Aorta (tissue), 5 donors: ENCODE measurements at regions of chr11 and their contacts with region 1.

Region 1: DNA sequence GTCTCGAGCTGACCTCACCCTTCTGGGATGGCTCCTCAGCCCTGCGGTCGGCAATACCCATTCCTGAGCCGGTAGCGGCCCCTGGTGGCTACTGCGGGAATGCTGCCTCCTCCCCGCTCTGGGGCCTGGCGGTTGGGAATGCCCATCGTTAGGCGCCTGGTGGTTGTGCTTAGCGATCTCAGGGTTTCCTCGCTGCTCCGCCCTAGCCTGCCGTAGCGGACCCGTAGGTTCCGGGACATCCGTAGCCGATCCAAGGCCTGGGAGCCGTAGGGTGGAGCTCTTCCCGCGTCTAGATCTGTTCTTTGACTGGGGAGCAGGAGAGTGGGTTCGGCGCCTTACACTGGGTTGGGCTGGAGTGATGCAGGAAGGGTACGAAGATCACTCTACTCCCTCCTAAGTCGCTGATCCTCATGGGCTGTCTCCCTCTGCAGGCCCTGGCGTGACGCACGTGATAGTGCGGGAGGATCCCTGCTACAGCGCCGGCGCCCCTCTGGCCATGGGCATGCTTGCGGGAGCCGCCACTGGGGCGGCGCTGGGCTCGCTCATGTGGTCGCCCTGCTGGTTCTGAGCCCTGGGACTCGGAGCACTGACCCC is 14.8 kb downstream of the PLEKHB1 start:
- DNase-seq: peak; percentile 94 to 97
- ATAC-seq: peak; percentile 97
- H3K4me3 ChIP-seq: no peak overlapping the region
- H3K27ac ChIP-seq: no peak overlapping the region
- H3K4me1 ChIP-seq: no peaks in the 10 kb centered on the region
- H3K27me3 ChIP-seq: no peaks in the 10 kb centered on the region

Region 2: DNA sequence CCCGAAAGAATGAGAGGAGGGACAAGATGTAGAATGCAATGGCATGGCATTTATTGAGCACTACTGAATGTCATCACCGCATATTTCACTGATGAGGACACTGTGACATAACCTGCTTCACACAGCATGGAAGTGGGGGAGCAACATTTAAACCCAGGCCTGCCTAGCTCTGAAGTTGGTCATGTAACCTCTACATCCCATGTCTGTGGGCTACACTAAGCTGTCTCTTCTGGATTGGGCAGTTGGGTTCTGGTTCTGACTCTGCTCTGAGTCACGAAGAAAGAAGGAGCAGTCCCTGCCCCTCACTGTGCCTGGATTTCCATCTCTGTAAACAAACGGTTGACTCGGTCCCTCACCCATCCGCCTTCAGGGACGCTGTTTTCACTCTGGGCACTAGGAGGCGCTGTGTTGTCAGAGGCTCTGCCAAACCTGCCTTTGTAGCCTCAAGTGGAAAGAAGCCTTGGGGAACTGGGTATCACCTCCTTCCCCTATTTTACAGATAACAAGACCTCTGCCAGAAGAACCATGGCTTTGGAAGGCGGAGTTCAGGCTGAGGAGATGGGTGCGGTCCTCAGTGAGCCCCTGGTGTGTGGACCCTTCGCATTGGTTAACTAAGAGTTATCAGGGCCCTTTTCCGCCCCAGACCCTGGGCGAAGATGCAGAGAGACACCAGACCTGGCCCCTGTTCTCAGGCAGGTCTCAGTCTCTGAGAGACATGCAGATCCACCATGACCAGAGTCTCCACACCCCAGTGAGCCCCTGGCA is 365.7 kb before region 1 on chr11:
- intact Hi-C with region 1: loop called in 1 of 2 experiments (anchors 10 kb)
- DNase-seq: peak; percentile 80 to 92
- ATAC-seq: peak; percentile 51
- H3K4me3 ChIP-seq: no peak overlapping the region
- H3K27ac ChIP-seq: no peak overlapping the region
- H3K4me1 ChIP-seq: no peaks in the 10 kb centered on the region
- H3K27me3 ChIP-seq: no peaks in the 10 kb centered on the region

Region 3: GRCh38 chr11:73404048-73404447 is 257.1 kb before region 1 on chr11:
- intact Hi-C with region 1: loop called (anchors 5 kb)
- DNase-seq: peak; percentile 82 to 83
- ATAC-seq: peak; percentile 80
- H3K4me3 ChIP-seq: no peak overlapping the region
- H3K27ac ChIP-seq: no peak overlapping the region
- H3K4me1 ChIP-seq: no peaks in the 10 kb centered on the region
- H3K27me3 ChIP-seq: no peaks in the 10 kb centered on the region

Region 4: GRCh38 chr11:73597956-73598718 is 63.0 kb before region 1 on chr11 and contains the start of gene FAM168A:
- intact Hi-C with region 1: no loop called
- DNase-seq: peak; percentile 98 to 99
- ATAC-seq: peak; percentile 100
- H3K4me3 ChIP-seq: peak within 1 kb of the TSS; percentile 73 to 85
- H3K27ac ChIP-seq: peak within 1 kb of the TSS in 1 of 2 donors; percentile 82
- H3K4me1 ChIP-seq: no peaks in the 10 kb centered on the region
- H3K27me3 ChIP-seq: no peaks in the 10 kb centered on the region
- total RNA-seq, gene FAM168A: 36.2 to 52.0 TPM

Region 5: DNA sequence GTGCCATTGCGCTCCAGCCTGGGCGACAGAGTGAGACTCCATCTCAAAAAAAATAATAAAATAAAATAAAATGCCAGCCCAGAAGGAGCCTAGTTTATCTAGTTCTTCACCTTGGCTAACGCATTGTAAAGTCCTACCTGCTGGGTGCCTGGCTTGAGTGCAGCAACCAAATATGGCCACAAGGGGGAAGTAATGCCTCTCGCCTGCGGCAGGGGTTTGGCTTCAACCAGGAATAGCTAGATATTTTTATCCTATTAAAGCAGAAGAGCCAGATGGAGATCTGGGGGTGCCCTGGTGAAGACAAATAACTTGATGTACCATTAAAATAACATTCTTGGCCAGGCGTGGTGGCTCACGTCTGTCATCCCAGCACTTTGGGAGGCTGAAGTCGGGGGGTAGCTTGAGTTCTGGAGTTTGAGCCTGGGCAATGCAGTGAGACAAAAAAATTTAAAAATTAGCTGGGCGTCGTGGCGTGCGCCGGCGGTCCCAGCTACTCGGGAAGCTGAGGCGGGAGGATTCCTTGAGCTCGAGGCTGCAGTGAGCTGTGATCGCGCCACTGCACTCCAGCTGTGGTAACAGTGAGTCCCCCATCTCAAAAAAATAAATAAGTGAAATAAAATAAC is 35.3 kb before region 1 on chr11:
- intact Hi-C with region 1: loop called (anchors 2 to 5 kb)
- DNase-seq: peak; percentile 75 to 82
- ATAC-seq: peak; percentile 84
- H3K4me3 ChIP-seq: no peak overlapping the region
- H3K27ac ChIP-seq: no peak overlapping the region
- H3K4me1 ChIP-seq: no peaks in the 10 kb centered on the region
- H3K27me3 ChIP-seq: no peaks in the 10 kb centered on the region